Activated CD4-positive, alpha-beta memory T cell treated with anti-CD3 and anti-CD28 coated beads for 36 hours (primary cell): ENCODE measurements at regions of chr19 and their contacts with region 1.

Region 1: GRCh38 chr19:42596391-42597072 is 1.8 kb upstream of the CEACAM8 start:
- DNase-seq: peak; percentile 48
- H3K4me3 Mint-ChIP-seq: no peak overlapping the region
- H3K27ac Mint-ChIP-seq: no peak overlapping the region
- H3K4me1 Mint-ChIP-seq: no peaks in the 10 kb centered on the region
- H3K27me3 Mint-ChIP-seq: peaks cover 12% of the 10 kb centered on the region

Region 2: DNA sequence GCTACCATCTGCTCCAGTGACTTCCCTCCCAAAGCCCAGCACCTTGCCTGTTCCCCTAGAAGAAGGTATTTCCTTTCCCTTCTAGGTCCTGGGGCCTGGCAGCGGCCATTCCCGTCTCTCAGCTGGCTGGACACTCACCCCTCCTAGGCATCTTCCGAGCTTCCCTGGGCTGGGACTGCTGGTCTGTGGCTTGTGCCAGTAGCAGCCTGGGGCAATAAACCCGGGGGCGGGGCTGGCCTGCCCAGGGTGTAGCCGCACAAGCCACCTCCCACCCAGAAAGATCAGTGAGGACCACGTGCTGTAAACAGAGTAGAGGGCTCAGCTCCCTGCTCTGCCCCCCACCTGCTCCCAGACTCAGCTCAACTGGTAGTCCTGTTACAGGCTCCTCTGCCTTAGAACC is 184.3 kb before region 1 on chr19:
- CTCF ChIA-PET with region 1: no interaction called
- POLR2A ChIA-PET with region 1: no interaction called
- intact Hi-C with region 1: no loop called
- DNase-seq: no peak
- H3K4me3 Mint-ChIP-seq: no peak overlapping the region
- H3K27ac Mint-ChIP-seq: no peak overlapping the region
- H3K4me1 Mint-ChIP-seq: no peaks in the 10 kb centered on the region
- H3K27me3 Mint-ChIP-seq: no peaks in the 10 kb centered on the region

Region 3: DNA sequence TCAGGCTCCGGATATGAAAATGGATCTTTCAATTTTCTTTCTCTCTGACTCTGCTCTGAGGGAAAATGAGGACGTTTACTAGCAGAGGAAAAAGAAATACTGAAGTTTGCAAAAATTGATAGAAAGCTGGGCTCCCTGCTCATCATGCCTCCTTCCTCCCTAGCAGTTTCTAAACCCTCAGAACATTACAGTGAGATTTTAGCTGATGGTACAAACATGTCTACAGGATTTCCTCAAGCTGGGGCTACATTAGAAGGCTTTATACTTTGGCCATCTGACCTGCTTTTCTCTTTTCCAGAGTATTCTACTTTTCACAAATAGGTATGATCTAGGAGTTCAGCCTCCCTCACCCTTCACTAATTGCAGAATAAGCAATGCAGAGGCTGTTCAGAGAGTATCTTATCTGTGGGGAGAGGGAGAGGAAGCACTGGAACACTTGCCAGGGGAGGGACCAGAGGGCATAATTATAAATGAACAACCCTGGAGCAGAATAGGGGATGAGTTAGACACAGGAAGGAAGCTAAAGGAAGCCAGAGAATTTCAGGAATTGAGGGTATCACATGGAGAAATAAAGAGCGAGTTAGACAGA is 98.3 kb before region 1 on chr19:
- CTCF ChIA-PET with region 1: no interaction called
- POLR2A ChIA-PET with region 1: no interaction called
- intact Hi-C with region 1: no loop called
- DNase-seq: no peak
- H3K4me3 Mint-ChIP-seq: no peak overlapping the region
- H3K27ac Mint-ChIP-seq: no peak overlapping the region
- H3K4me1 Mint-ChIP-seq: peaks cover 7% of the 10 kb centered on the region
- H3K27me3 Mint-ChIP-seq: no peaks in the 10 kb centered on the region

Region 4: DNA sequence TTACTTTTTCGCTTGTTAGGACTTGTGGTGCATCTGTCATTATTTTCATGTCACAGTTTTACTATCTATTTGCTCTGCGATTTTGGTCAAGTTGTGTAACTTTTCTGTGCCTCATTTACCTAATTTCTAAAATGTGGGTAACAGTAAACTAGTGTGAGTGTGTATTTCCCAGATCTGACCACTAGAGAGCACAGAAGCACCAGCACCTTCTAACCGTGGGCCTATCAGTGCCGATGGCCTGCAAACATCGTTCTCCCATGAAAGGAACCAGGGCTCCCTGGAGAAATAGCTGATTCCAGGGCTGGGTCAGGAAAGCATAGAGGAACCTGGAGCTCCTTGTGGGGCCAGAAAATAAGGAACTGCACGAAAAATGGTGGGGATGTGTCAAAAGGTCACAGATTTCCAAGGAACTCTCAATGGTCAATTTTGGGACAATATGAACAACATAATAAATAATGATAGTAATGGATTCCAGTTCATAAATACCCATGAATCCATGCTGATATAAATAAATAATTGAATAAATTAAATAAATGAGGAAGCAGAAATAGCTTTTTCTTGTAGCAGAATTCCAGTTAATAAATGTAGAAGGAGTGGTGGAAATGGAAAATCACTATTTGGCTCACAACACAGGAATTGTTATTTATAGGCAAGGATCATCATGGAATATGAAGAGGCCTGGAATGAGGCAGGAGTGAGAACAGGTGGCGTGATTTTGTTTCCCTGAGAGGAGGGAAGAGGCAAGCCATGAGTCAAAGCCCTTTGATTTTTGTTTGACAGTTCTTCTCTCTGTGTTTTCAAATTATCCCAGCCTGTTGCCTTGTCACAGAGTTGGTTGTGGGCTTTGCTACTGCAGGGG is 33.0 kb before region 1 on chr19:
- CTCF ChIA-PET with region 1: interaction called, 39 read pairs
- POLR2A ChIA-PET with region 1: no interaction called
- intact Hi-C with region 1: loop called (anchors 1 kb)
- DNase-seq: peak; percentile 30
- H3K4me3 Mint-ChIP-seq: no peak overlapping the region
- H3K27ac Mint-ChIP-seq: no peak overlapping the region
- H3K4me1 Mint-ChIP-seq: peaks cover 2% of the 10 kb centered on the region
- H3K27me3 Mint-ChIP-seq: peaks cover 5% of the 10 kb centered on the region

Region 5: GRCh38 chr19:42584466-42584865 is 12.1 kb before region 1 on chr19:
- CTCF ChIA-PET with region 1: interaction called, 13 read pairs
- POLR2A ChIA-PET with region 1: no interaction called
- intact Hi-C with region 1: no loop called
- DNase-seq: no peak
- H3K4me3 Mint-ChIP-seq: no peak overlapping the region
- H3K27ac Mint-ChIP-seq: no peak overlapping the region
- H3K4me1 Mint-ChIP-seq: no peaks in the 10 kb centered on the region
- H3K27me3 Mint-ChIP-seq: peaks cover 11% of the 10 kb centered on the region